Naive thymus-derived CD4-positive, alpha-beta T cell (primary cell): ENCODE measurements at regions of chr19 and their contacts with region 1.

Region 1: GRCh38 chr19:9768175-9769112 is at the start of gene ZNF846:
- DNase-seq: peak; percentile 83 to 94 (median 91)
- ATAC-seq: peak; percentile 98
- H3K4me3 ChIP-seq: peak within 1 kb of the TSS; percentile 95
- H3K4me3 Mint-ChIP-seq: peak within 1 kb of the TSS; percentile 81 to 99 (median 95)
- H3K27ac ChIP-seq: peak within 1 kb of the TSS; percentile 93
- H3K27ac Mint-ChIP-seq: peak within 1 kb of the TSS; percentile 92 to 100 (median 97)
- H3K4me1 ChIP-seq: peaks cover 8 to 10% of the 10 kb centered on the region in 2 donors
- H3K4me1 Mint-ChIP-seq: peaks cover 0 to 21% (median 9%) of the 10 kb centered on the region in 7 donors
- H3K27me3 ChIP-seq: no peaks in the 10 kb centered on the region
- H3K27me3 Mint-ChIP-seq: no peaks in the 10 kb centered on the region
- total RNA-seq, gene ZNF846: 5.1 to 24.8 (median 13.0) TPM

Region 2: DNA sequence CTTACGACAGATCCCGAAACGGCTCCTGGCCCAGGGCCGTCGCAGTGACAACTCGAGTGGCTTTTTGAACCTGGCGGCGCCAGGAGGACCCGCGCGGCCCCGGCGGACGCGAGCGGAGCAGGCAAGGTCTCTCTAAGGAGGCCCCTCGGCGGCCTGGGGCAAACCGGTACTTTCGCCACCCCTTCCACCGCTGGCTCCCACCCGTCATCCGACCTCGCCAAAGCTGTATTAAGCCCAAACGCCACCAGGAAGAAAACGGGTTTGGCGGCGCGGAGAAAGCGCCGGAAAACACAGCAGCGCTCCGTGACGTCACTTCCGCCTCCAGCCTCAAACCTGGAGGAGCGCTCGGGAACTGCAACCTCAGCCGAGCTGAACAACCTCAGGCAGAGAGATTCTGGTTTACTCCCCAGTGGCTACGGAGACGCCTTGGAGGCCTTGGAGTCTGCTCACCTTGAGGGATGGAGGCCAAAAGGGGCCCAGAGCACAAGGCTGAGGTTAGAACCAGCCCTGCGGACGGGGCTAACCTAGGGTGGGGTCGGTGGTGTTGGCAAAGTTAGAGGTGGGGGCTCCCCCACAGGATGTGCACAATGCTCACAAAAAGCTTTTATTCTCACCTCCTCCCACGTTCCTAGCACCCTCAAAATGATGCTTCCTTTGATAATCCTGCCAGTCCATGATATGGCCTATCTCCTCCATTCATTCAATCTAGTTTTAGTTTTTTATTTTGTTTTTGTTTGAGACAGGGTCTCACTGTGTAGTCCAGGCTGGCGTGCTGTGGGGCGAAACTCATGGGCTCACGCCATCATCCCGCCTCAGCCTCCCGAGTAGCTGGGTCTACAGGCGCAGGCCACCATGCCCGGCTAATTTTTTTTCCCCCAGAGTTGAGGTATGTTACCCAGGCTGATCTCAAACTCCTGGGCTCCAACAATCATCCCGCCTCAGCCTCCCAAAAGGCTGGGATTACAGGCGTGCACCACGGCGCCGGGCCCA is 332.9 kb before region 1 on chr19 and contains the start of gene ZNF266:
- CTCF ChIA-PET with region 1: no interaction called
- POLR2A ChIA-PET with region 1: no interaction called
- intact Hi-C with region 1: loop called in 1 of 2 experiments (anchors 5 kb)
- DNase-seq: peak; percentile 82 to 93 (median 91)
- ATAC-seq: peak; percentile 92
- H3K4me3 ChIP-seq: peak within 1 kb of the TSS; percentile 73
- H3K4me3 Mint-ChIP-seq: peak within 1 kb of the TSS; percentile 89 to 97 (median 93)
- H3K27ac ChIP-seq: peak within 1 kb of the TSS; percentile 94
- H3K27ac Mint-ChIP-seq: peak within 1 kb of the TSS; percentile 95 to 99 (median 98)
- H3K4me1 ChIP-seq: peaks cover 26 to 27% of the 10 kb centered on the region in 2 donors
- H3K4me1 Mint-ChIP-seq: peaks cover 20 to 54% (median 48%) of the 10 kb centered on the region in 7 donors
- H3K27me3 ChIP-seq: no peaks in the 10 kb centered on the region
- H3K27me3 Mint-ChIP-seq: no peaks in the 10 kb centered on the region
- total RNA-seq, gene ZNF266: 34.0 to 73.9 (median 55.0) TPM

Region 3: GRCh38 chr19:9674663-9675357 is 93.6 kb before region 1 on chr19 and contains the start of gene ZNF562:
- CTCF ChIA-PET with region 1: no interaction called
- POLR2A ChIA-PET with region 1: interaction called, 7 read pairs
- intact Hi-C with region 1: loop called in 1 of 2 experiments (anchors 1 kb)
- DNase-seq: peak; percentile 66 to 82 (median 76)
- ATAC-seq: peak; percentile 92
- H3K4me3 ChIP-seq: peak within 1 kb of the TSS; percentile 99
- H3K4me3 Mint-ChIP-seq: peak within 1 kb of the TSS; percentile 86 to 99 (median 96)
- H3K27ac ChIP-seq: peak within 1 kb of the TSS; percentile 91
- H3K27ac Mint-ChIP-seq: peak within 1 kb of the TSS; percentile 87 to 99 (median 96)
- H3K4me1 ChIP-seq: peaks cover 0 to 4% of the 10 kb centered on the region in 2 donors
- H3K4me1 Mint-ChIP-seq: peaks cover 11 to 33% (median 29%) of the 10 kb centered on the region in 7 donors
- H3K27me3 ChIP-seq: no peaks in the 10 kb centered on the region
- H3K27me3 Mint-ChIP-seq: no peaks in the 10 kb centered on the region
- total RNA-seq, gene ZNF562: 8.9 to 18.6 (median 16.5) TPM

Region 4: GRCh38 chr19:9785367-9786331 is 17.2 kb after region 1 on chr19:
- CTCF ChIA-PET with region 1: no interaction called
- POLR2A ChIA-PET with region 1: interaction called, 12 read pairs
- intact Hi-C with region 1: loop called (anchors 1 kb)
- DNase-seq: peak; percentile 81 to 97 (median 92)
- ATAC-seq: peak; percentile 92
- H3K4me3 ChIP-seq: peak overlapping the region; percentile 86
- H3K4me3 Mint-ChIP-seq: peak overlapping the region; percentile 73 to 95 (median 88)
- H3K27ac ChIP-seq: peak overlapping the region; percentile 80
- H3K27ac Mint-ChIP-seq: peak overlapping the region; percentile 83 to 99 (median 94)
- H3K4me1 ChIP-seq: peaks cover 5 to 9% of the 10 kb centered on the region in 2 donors
- H3K4me1 Mint-ChIP-seq: peaks cover 10 to 37% (median 27%) of the 10 kb centered on the region in 7 donors
- H3K27me3 ChIP-seq: no peaks in the 10 kb centered on the region
- H3K27me3 Mint-ChIP-seq: no peaks in the 10 kb centered on the region

Region 5: DNA sequence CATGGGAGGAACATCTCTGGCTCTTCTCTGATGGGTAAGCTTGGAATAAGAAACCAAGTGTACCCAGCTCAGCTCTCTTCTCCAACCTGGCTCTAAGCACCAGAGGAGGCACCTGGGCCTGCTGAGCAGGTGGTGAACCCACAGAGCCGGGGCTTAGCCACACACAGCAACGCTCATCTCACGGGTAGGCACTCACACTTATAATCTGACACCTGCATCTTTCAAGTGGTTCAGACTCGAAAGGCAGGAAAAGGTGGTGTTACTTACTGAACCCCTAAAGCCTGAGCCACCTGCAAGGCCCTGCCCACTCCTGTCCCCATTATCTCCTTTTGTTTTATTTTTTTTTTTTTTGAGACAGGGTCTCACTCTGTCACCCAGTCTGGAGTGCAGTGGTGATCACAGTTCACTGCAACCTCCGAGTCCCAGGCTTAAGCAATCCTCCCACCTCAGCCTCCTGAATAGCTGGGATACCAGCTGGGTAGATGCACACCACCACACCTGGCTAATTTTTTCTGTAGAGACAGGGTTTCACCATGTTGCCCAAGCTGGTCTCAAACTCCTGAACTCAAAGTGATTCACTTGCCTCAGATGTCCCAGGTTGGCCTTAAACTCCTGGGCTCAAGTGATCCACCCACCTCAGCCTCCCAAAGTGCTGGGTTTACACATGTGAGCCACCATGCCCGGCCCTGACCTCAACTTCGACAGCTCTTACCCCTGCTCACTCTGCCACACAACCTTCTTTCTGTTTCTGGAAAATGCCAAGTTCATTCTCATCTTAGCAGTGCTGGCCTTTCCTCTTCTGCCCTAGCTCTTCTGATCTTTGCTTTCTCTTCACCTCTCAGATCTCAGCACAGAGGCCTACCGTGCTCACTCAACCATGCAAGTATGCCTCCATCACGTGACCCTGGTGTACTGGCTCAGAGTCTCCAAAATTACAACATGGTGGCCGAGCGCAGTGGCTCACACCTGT is 40.7 kb after region 1 on chr19:
- CTCF ChIA-PET with region 1: no interaction called
- POLR2A ChIA-PET with region 1: interaction called, 12 read pairs
- intact Hi-C with region 1: no loop called
- DNase-seq: peak in 7 of 9 donors; percentile 38 to 73 (median 68)
- ATAC-seq: peak; percentile 90
- H3K4me3 ChIP-seq: no peak overlapping the region
- H3K4me3 Mint-ChIP-seq: peak overlapping the region in 9 of 10 donors; percentile 6 to 83 (median 63)
- H3K27ac ChIP-seq: peak overlapping the region; percentile 61
- H3K27ac Mint-ChIP-seq: peak overlapping the region; percentile 4 to 95 (median 85)
- H3K4me1 ChIP-seq: peaks cover 29 to 52% of the 10 kb centered on the region in 2 donors
- H3K4me1 Mint-ChIP-seq: peaks cover 9 to 50% (median 36%) of the 10 kb centered on the region in 7 donors
- H3K27me3 ChIP-seq: no peaks in the 10 kb centered on the region
- H3K27me3 Mint-ChIP-seq: no peaks in the 10 kb centered on the region

Region 6: GRCh38 chr19:9827289-9828238 is 59.1 kb after region 1 on chr19 and contains the start of gene UBL5:
- CTCF ChIA-PET with region 1: no interaction called
- POLR2A ChIA-PET with region 1: interaction called, 9 read pairs
- intact Hi-C with region 1: loop called in 1 of 2 experiments (anchors 1 kb)
- DNase-seq: peak; percentile 72 to 91 (median 89)
- ATAC-seq: peak; percentile 98
- H3K4me3 ChIP-seq: peak within 1 kb of the TSS; percentile 97
- H3K4me3 Mint-ChIP-seq: peak within 1 kb of the TSS; percentile 90 to 100 (median 99)
- H3K27ac ChIP-seq: peak within 1 kb of the TSS; percentile 87
- H3K27ac Mint-ChIP-seq: peak within 1 kb of the TSS; percentile 83 to 99 (median 98)
- H3K4me1 ChIP-seq: peaks cover 14 to 16% of the 10 kb centered on the region in 2 donors
- H3K4me1 Mint-ChIP-seq: peaks cover 15 to 45% (median 27%) of the 10 kb centered on the region in 7 donors
- H3K27me3 ChIP-seq: no peaks in the 10 kb centered on the region
- H3K27me3 Mint-ChIP-seq: no peaks in the 10 kb centered on the region
- total RNA-seq, gene UBL5: 182 to 375 (median 198) TPM

Region 7: GRCh38 chr19:9847087-9847671 is 78.7 kb after region 1 on chr19:
- CTCF ChIA-PET with region 1: no interaction called
- POLR2A ChIA-PET with region 1: no interaction called
- intact Hi-C with region 1: no loop called
- DNase-seq: no peak
- ATAC-seq: peak; percentile 47
- H3K4me3 ChIP-seq: no peak overlapping the region
- H3K4me3 Mint-ChIP-seq: peak overlapping the region in 1 of 10 donors; percentile 56
- H3K27ac ChIP-seq: no peak overlapping the region
- H3K27ac Mint-ChIP-seq: peak overlapping the region in 3 of 9 donors; percentile 65 to 73 (median 70)
- H3K4me1 ChIP-seq: no peaks in the 10 kb centered on the region
- H3K4me1 Mint-ChIP-seq: peaks cover 3 to 49% (median 25%) of the 10 kb centered on the region in 7 donors
- H3K27me3 ChIP-seq: no peaks in the 10 kb centered on the region
- H3K27me3 Mint-ChIP-seq: no peaks in the 10 kb centered on the region